Right ventricle myocardium inferior (tissue), 1 donor: ENCODE measurements at regions of chr20 and their contacts with region 1.

Region 1: GRCh38 chr20:32674362-32674789 is 635 bp upstream of the C20orf203 start:
- DNase-seq: no peak
- ATAC-seq: no peak

Region 2: DNA sequence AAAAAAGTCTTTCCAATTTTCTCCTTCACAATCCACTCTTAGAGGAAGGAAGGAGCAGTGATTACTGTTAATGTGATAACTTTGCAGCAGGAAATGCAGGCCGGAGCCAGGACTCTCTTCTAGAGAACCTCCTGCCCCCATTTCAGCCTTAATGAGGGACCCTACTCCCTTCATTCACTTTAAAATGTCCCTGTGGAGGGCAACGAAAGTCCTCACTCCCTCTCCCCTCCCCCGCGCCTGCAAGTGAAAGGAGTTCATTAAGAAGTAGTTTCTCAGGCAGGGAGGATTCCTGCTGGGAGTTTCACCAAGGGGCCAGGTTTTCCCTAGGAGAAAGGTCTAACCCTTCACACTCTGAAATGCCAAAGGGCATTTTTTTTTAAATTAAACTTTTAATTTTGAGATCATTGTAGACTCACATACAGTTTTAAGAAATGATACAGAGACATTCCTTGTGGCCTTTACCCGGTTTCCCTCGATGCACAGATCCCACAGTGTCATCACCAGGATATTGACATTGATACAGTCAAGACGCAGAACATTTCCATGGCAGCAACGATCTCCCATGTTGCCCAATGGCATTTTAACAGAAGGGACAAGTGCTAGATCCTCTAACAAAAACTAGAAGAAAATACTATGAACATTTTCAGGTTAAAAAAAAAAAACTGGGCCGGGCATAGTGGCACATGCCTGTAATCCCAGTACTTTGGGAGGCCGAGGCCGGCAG is 75.7 kb after region 1 on chr20:
- intact Hi-C with region 1: no loop called
- DNase-seq: no peak
- ATAC-seq: no peak

Region 3: GRCh38 chr20:32762149-32762753 is 87.9 kb after region 1 on chr20 and contains the start of gene DNMT3B:
- intact Hi-C with region 1: loop called (anchors 5 kb)
- DNase-seq: peak; percentile 90
- ATAC-seq: peak; percentile 91
- total RNA-seq, gene DNMT3B: 0.32 TPM

Region 4: DNA sequence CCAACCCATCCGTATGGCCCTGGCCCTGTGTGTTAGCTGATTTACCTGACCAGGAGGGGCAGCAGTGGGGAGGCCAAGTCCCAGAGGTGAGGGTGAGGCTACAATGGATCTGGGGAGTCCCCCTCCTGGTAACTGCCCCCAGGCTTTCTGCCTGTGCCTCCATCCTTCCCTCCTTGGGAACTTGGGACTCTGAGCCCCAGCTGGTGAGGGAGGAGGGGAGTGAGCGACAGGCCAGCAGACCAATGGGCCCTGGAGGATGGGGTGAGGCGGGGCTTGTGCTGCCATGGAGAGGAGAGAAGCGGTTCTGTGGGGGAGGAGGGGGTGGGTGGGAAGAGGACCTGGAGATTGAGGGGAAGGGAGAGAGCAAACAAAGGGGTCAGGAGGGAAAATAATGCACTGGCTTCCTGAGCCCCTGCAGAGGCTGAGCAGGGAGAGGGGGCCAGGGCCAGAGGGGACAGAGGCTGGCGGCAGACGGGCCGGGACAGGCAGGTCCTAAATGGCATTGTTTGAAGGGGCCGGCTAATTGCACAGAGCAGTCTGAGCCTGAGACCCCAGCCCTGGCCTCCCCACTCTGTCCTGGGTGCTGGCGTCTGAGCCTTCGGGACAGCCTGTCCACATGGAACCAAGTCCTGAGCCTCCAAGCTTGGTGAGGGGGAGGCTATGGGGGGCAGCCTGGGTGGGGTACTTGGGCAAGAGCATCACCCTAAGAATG is 105.3 kb after region 1 on chr20:
- intact Hi-C with region 1: loop called (anchors 2 kb)
- DNase-seq: no peak
- ATAC-seq: no peak